ENCODE measurements at regions of chr17 and their contacts with region 1.

Region 1: GRCh38 chr17:59869941-59870218 is 22.9 kb downstream of the TUBD1 start:
- DNase-seq: no peak
- ATAC-seq: no peak
- H3K4me3 ChIP-seq: no peak overlapping the region
- H3K27ac ChIP-seq: no peak overlapping the region
- H3K4me1 ChIP-seq: peaks cover 4% of the 10 kb centered on the region; the same call in 1 of the 2 replicates
- H3K27me3 ChIP-seq: no peaks in the 10 kb centered on the region
- CTCF ChIP-seq: no peak

Region 2: DNA sequence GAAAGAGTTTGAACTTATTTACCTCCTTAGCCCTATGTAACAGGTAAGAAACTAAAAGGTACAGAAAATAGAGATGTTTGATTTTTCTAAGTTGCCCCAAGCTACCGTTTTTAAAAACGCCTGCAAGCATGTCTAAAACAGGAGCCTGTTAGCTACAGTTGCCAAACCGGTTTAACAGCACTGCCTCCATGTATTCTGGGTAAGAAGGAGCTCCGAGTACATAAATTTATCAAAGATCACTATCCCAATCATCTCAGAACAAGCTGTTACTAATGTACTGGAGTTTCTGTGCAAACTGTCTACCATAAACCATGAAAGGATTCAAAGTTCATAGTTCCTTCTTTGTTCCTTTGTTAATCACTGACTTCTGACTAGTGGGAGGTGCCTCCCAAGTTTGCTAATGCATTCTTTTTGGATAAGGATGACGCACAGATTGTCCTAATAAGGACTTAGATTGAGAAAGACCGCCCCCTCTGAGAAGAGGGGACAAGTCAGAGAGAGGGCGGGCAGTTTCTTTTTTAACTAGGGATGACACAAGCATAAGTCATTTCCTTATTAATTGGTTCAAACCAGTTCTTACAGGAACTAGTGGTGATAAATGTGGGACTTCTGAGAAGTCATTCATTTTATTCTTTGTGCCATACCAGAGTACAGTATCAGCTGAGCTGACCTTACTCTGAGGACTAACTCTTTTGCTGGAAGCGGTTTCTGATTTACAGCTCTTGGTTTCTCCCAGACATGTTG is 32.4 kb before region 1 on chr17:
- CTCF ChIA-PET with region 1: no interaction called
- POLR2A ChIA-PET with region 1: no interaction called
- intact Hi-C with region 1: no loop called
- DNase-seq: peak; percentile 100
- ATAC-seq: peak; percentile 75
- H3K4me3 ChIP-seq: peak overlapping the region; percentile 88
- H3K27ac ChIP-seq: peak overlapping the region; percentile 95
- H3K4me1 ChIP-seq: peaks cover 21% of the 10 kb centered on the region
- H3K27me3 ChIP-seq: no peaks in the 10 kb centered on the region
- CTCF ChIP-seq: no peak

Region 3: DNA sequence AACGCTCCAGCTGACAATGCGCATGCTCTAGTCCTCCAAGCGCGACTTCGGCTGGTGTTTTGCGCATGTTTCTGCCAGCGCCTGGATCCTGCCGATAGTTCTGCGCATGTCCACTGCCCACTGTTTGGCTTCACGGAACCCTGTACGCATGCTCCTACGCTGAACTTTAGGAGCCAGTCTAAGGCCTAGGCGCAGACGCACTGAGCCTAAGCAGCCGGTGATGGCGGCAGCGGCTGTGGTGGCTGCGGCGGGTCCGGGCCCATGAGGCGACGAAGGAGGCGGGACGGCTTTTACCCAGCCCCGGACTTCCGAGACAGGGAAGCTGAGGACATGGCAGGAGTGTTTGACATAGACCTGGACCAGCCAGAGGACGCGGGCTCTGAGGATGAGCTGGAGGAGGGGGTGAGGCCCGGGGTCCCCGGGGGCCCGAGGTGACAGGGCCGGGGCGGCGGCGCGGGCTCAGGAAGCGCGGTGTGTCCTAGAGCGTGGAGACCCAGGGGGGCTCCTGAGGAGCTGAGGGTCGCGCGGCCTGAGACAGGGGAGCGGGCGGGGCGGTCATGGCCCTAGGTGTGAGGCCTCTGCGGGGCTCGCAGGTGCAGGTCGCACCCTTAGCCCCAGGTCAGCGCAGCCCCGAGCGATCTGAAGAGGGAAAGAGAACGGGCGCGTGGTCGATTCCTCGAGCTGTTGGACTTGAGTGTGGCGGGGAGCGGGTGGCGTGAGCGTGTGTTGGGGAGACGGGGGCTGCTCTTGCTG is 23.2 kb after region 1 on chr17 and contains the starts of genes RPS6KB1 and TUBD1:
- CTCF ChIA-PET with region 1: no interaction called
- POLR2A ChIA-PET with region 1: interaction called, 15 read pairs
- intact Hi-C with region 1: no loop called
- DNase-seq: peak; percentile 100
- ATAC-seq: peak; percentile 95
- H3K4me3 ChIP-seq: peak within 1 kb of the TSS; percentile 84
- H3K27ac ChIP-seq: peak within 1 kb of the TSS; percentile 39
- H3K4me1 ChIP-seq: peaks cover 31% of the 10 kb centered on the region
- H3K27me3 ChIP-seq: no peaks in the 10 kb centered on the region
- CTCF ChIP-seq: no peak
- total RNA-seq, gene RPS6KB1: 43.4 and 51.5 TPM in 2 replicates
- total RNA-seq, gene TUBD1: 8.2 and 11.0 TPM in 2 replicates